ENCODE measurements at regions of chr21 and their contacts with region 1.

Region 1: DNA sequence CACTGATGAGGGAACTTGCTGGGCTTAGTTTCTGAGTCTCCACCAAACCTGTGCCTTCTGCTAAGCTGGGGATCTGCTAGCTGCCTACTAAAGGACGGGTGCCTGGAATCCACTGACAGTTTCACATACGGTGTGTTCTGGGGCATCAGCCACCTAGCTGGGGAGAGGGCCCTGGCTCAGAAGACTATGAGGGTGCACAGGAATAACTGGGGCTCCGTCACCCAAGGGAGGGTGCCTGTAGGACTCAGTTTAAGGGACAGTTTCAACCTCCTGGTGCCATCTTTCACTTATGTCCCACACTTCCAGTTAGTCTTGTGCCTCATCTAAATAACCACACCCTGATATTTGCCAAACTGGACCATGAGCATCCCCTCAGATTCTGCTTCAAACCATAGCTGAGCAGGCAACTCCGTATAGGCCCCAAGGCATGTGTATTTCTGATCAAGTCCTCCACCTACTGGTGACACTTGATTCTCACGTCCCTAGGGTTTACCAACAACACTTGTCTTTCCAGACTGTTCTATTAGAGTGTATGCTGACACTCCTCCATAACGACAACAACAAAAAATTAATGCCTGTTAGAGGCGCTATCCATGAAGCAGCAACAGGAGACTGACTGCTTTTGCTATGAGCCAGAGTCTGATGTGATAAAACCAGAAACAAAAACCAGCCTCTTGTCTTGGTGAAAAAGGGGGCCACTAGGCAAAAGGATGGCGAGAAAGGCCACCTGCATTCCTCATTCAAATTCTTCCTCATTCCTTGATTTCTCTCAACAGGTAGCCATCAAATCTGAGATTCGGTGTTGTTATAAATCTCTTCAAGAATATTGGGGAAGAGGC is 55.0 kb upstream of the PAXBP1 start:
- ATAC-seq: peak; percentile 68 to 100 (median 96)
- H3K4me3 ChIP-seq: no peak overlapping the region
- H3K27ac ChIP-seq: no peak overlapping the region
- H3K4me1 ChIP-seq: no peaks in the 10 kb centered on the region

Region 2: GRCh38 chr21:32382108-32382644 is 444.4 kb before region 1 on chr21:
- in situ Hi-C with region 1: no loop called
- ATAC-seq: peak in 5 of 8 experiments; percentile 26 to 84 (median 60)
- H3K4me3 ChIP-seq: no peak overlapping the region
- H3K27ac ChIP-seq: no peak overlapping the region
- H3K4me1 ChIP-seq: no peaks in the 10 kb centered on the region

Region 3: GRCh38 chr21:32717851-32718316 is 108.7 kb before region 1 on chr21:
- in situ Hi-C with region 1: no loop called
- ATAC-seq: no peak
- H3K4me3 ChIP-seq: no peak overlapping the region
- H3K27ac ChIP-seq: no peak overlapping the region
- H3K4me1 ChIP-seq: peaks cover 3 to 6% of the 10 kb centered on the region in 2 donors

Region 4: GRCh38 chr21:33019885-33020557 is 193.5 kb after region 1 on chr21:
- in situ Hi-C with region 1: no loop called
- ATAC-seq: peak in 7 of 8 experiments; percentile 20 to 79 (median 67)
- H3K4me3 ChIP-seq: peak overlapping the region; percentile 5 to 25 (median 22)
- H3K27ac ChIP-seq: no peak overlapping the region
- H3K4me1 ChIP-seq: peaks cover 20 to 33% of the 10 kb centered on the region in 2 donors

Region 5: DNA sequence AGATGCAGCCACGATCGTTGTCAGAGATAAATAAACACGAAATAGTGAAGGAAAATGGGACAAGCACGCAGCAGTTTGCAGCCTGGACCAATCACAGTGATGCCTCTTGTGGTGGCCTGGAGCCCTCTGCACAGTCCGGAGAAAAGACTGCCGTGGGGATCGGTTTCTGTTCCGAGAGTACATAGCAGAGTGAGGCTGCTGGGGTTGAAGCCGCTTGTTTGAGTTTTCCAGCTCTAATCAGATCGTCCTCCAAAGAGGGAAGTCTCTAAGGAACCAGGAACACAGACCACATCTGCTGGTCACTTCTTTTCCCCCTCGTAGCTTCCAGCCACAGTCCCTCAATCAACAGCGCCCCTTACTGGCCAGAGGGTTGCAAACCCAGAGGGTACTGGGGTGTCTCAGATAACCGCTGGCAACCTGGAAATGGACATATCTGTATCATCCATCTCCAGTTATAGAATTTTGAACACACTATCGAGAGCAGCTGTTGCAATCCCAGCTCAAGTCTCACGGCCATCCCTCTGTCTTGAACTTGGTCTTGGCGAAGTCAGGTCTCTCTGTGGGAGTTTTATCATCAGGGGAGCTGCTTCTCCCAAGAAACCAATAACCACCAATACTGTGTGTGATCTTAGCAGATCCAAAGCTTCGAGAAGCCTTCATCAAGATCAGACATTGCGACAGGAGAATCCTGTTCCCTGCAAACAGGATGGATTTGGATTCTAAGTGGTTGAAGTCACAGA is 300.8 kb after region 1 on chr21:
- in situ Hi-C with region 1: loop called in 4 of 9 experiments (anchors 10 to 25 kb)
- ATAC-seq: peak; percentile 93 to 99 (median 96)
- H3K4me3 ChIP-seq: peak overlapping the region; percentile 14 to 33 (median 22)
- H3K27ac ChIP-seq: peak overlapping the region in 1 of 2 donors; percentile 7
- H3K4me1 ChIP-seq: peaks cover 33 to 39% of the 10 kb centered on the region in 2 donors

Region 6: DNA sequence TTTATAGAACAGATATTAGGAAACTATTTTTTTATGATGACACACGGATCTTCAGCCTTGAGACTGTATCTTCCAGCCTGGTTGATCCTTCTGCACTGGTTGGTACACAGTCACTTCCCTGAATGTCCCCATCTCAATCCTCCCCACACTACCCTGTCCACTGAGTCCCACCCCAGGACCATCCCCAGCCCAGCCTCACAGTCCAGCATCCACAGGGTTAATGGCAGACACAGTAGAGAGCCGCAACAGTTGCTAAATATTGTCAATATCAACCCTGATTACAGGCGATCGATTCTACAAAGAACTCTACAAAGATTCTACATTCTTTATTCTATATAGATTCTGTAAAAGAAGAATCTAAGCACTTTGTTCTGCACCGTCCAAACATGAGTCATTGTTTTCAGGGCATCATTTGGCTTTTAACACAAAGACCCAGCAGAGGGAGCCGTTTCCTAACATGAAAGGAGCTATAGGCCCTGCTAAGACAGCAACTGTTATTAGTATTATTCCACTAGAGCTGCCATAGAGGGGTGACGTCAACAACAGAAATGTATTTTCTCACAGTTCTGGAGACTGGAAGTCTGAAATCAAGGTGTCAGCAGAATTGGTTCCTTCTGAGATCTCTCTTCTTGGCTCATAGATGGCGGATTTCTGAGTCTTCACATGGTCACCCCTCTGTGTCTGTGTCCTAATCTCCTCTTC is 373.1 kb after region 1 on chr21:
- in situ Hi-C with region 1: loop called in 3 of 9 experiments (anchors 5 to 25 kb)
- ATAC-seq: peak; percentile 61 to 91 (median 84)
- H3K4me3 ChIP-seq: no peak overlapping the region
- H3K27ac ChIP-seq: no peak overlapping the region
- H3K4me1 ChIP-seq: peaks cover 3 to 7% of the 10 kb centered on the region in 2 donors

Region 7: GRCh38 chr21:33434770-33435360 is 608.3 kb after region 1 on chr21:
- in situ Hi-C with region 1: loop called in 2 of 9 experiments (anchors 25 kb)
- ATAC-seq: peak; percentile 37 to 97 (median 93)
- H3K4me3 ChIP-seq: no peak overlapping the region
- H3K27ac ChIP-seq: peak overlapping the region; percentile 10 to 21
- H3K4me1 ChIP-seq: peaks cover 4 to 7% of the 10 kb centered on the region in 2 donors